Activated CD8-positive, alpha-beta T cell treated with anti-CD3 and anti-CD28 coated beads, Interleukin-2, amount 10 ng/mL, durations not matched to agents 7 days and 5 days (primary cell): ENCODE measurements at regions of chr1 and their contacts with region 1.

Region 1: GRCh38 chr1:199113265-199113869 is 474.5 kb downstream of the PTPRC start:
- DNase-seq: peak; percentile 77
- ATAC-seq: peak; percentile 72
- H3K4me3 Mint-ChIP-seq: no peak overlapping the region
- H3K27ac Mint-ChIP-seq: peak overlapping the region; percentile 15
- H3K4me1 Mint-ChIP-seq: peaks cover 14% of the 10 kb centered on the region
- H3K27me3 Mint-ChIP-seq: no peaks in the 10 kb centered on the region

Region 2: GRCh38 chr1:198771563-198772153 is 341.7 kb before region 1 on chr1:
- CTCF ChIA-PET with region 1: interaction called, 11 read pairs
- POLR2A ChIA-PET with region 1: no interaction called
- DNase-seq: peak; percentile 39
- ATAC-seq: no peak
- H3K4me3 Mint-ChIP-seq: no peak overlapping the region
- H3K27ac Mint-ChIP-seq: no peak overlapping the region
- H3K4me1 Mint-ChIP-seq: peaks cover 9% of the 10 kb centered on the region
- H3K27me3 Mint-ChIP-seq: peaks cover 7% of the 10 kb centered on the region

Region 3: DNA sequence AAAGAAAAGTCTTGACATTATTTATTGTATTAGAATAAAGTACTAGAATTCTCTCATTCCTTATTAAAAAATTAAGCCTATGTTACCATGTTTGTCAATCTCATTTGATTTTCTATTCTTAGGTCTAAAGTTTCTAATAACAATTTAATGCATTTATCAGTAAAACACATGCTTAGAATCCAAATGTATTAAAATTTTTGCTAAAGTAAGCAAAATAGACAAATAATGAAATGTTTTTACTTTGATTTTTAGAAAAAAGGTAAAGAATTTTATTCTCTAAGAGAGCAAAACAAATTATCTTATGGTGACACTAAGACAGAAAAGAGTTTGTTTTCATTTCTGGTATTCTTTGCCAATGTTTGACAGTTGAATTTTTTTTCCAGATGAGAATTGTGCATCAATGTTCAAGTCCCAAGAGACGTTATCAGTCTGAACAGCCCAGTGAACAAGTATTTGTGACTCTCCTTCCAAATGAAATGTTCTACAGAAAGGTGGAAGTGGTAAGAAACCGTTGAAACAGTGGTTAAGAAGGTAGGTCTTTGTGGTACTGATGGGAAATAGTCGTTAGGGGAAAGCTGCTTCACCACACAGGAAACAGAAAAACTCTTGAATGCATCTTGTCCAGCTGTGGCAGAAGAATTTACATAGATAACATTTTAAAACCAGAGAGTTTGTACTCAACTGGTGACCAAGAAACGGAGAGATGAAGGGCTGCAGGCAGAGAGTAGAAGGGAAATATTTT is 72.0 kb before region 1 on chr1:
- CTCF ChIA-PET with region 1: interaction called, 17 read pairs
- POLR2A ChIA-PET with region 1: interaction called, 5 read pairs
- DNase-seq: peak; percentile 76
- ATAC-seq: peak; percentile 88
- H3K4me3 Mint-ChIP-seq: peak overlapping the region; percentile 15
- H3K27ac Mint-ChIP-seq: peak overlapping the region; percentile 81
- H3K4me1 Mint-ChIP-seq: peaks cover 51% of the 10 kb centered on the region
- H3K27me3 Mint-ChIP-seq: no peaks in the 10 kb centered on the region

Region 4: DNA sequence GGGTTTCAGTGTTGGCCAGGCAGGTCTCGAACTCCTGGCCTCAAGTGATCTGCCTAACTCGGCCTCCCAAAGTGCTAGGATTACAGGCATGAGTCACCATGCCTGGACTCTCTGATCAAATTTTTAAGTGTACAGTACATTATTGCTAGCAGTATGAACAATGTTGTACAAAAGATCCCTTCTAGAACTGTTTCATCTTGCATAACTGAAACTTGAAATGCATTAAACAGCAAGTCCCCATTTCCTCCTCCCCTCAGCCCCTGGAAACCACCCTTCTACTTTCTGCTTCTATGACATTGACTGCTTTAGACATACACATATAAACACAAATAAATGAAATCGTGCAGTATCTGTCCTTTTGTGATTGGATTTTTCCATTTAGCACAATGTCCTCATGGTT is 11.1 kb before region 1 on chr1:
- CTCF ChIA-PET with region 1: interaction called, 10 read pairs
- POLR2A ChIA-PET with region 1: no interaction called
- DNase-seq: no peak
- ATAC-seq: no peak
- H3K4me3 Mint-ChIP-seq: no peak overlapping the region
- H3K27ac Mint-ChIP-seq: no peak overlapping the region
- H3K4me1 Mint-ChIP-seq: peaks cover 13% of the 10 kb centered on the region
- H3K27me3 Mint-ChIP-seq: no peaks in the 10 kb centered on the region

Region 5: DNA sequence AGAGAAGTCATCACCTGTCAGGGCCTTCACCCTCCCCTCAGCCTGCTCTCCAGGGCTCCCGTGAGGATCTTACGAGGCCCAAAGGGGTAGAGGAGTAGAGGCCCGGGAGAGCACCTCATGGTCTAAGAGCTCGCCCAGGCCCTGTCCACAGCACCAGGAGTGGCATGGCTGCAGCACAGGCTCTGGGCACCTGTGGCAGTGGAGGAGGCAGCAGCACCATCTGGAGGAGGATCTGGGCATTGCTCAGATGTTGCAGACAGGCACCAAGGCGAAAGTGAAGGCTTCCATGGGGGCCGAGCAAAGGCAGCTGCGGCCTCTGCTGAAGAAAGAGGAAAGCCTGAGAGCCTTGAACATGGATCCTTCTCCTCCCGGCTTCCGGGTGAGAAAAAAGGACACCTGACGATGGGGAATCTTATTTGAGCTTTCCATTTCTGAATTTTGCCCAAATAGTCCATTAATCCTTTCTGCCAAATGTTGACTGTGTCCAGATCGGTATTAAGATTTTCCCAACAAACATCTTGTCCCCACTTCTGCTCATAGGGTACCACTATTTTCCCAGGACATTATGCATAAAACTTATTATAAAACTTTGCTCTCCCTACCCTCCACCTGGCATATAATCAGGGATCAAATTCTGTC is 130.2 kb after region 1 on chr1:
- CTCF ChIA-PET with region 1: interaction called, 16 read pairs
- POLR2A ChIA-PET with region 1: no interaction called
- DNase-seq: peak; percentile 83
- ATAC-seq: peak; percentile 99
- H3K4me3 Mint-ChIP-seq: no peak overlapping the region
- H3K27ac Mint-ChIP-seq: peak overlapping the region; percentile 28
- H3K4me1 Mint-ChIP-seq: peaks cover 20% of the 10 kb centered on the region
- H3K27me3 Mint-ChIP-seq: peaks cover 6% of the 10 kb centered on the region